Heart right ventricle (tissue), 16 donors: ENCODE measurements at regions of chr7 and their contacts with region 1.

Region 1: GRCh38 chr7:54632696-54633095 is 90.5 kb downstream of the VSTM2A start:
- DNase-seq: no peak
- ATAC-seq: no peak
- H3K4me3 ChIP-seq: no peak overlapping the region
- H3K27ac ChIP-seq: no peak overlapping the region
- H3K4me1 ChIP-seq: no peaks in the 10 kb centered on the region
- H3K27me3 ChIP-seq: no peaks in the 10 kb centered on the region
- CTCF ChIP-seq: no peak

Region 2: GRCh38 chr7:54419209-54419608 is 213.5 kb before region 1 on chr7:
- intact Hi-C with region 1: no loop called
- DNase-seq: no peak
- ATAC-seq: no peak
- H3K4me3 ChIP-seq: no peak overlapping the region
- H3K27ac ChIP-seq: no peak overlapping the region
- H3K4me1 ChIP-seq: no peaks in the 10 kb centered on the region
- H3K27me3 ChIP-seq: no peaks in the 10 kb centered on the region
- CTCF ChIP-seq: no peak

Region 3: GRCh38 chr7:54689394-54690049 is 56.8 kb after region 1 on chr7:
- intact Hi-C with region 1: loop called in 1 of 10 experiments (anchors 10 kb)
- DNase-seq: no peak
- ATAC-seq: no peak
- H3K4me3 ChIP-seq: no peak overlapping the region
- H3K27ac ChIP-seq: no peak overlapping the region
- H3K4me1 ChIP-seq: no peaks in the 10 kb centered on the region
- H3K27me3 ChIP-seq: no peaks in the 10 kb centered on the region
- CTCF ChIP-seq: no peak